HEK293 (cell line): ENCODE measurements at regions of chr20 and their contacts with region 1.

Region 1: DNA sequence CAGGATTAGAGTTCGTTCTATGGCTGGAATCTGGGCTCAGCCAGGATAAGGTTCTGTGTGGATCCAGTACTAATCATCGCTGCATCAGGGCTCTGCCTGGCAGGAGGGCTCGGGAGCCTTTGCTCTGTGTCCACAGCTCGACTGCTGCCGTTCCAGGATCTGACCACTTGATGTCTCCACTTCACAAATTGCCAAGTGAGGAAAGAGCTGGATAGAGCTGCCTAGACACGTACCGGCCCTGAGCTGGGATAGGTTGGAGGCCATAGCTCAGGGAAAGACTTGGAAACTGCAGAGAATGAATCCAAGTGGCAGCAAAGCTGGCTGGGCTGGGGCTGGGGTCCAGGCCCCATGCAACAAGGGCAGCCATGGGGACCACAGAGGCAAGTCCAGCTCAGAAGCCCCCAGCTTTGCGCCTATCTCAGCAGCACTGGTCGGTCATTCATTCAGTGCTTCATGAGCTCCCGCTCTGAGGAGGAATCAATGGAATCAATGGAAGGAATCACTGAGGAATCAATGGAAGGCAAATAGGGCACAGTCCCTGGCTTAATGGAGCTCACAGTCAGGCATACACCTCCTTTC is 38.0 kb upstream of the TOP1 start:
- H3K4me3 ChIP-seq: no peak overlapping the region
- H3K27ac ChIP-seq: no peak overlapping the region
- H3K4me1 ChIP-seq: no peaks in the 10 kb centered on the region
- CTCF ChIP-seq: peak; percentile 79

Region 2: DNA sequence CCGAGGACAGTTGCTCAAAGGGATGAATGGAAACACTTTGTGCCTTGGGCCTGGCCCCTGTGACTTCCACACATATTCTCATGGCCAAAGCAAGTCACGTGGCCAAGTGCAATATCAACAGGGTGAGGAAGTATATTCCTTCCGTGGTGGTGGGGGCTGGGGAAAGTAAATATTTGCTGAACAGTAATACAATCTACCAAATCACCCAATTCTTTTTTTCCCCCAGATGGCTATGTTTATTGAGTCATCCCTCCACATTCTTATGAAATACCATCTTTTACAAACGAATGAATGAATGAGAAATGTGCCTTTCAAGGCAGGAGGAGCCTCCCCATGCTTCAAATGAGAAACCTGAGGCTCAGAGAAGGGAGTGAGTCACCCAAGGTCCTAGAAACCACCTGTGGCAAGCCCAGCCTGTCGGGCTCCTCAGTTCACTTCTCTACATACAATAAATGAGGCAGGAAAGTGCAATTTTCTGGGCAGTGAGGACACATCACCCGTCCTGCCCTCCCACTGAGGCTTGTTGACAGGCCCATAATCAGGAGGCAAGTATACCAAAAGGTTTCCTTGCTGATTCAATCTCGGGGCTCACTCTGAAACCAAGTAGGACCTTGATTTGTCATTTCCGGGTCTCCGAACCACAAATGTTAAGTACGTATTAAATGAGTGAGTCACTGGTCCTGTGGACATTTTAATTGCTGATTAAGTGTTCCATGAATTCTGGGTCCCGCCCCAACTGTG is 12.7 kb after region 1 on chr20:
- CTCF ChIA-PET with region 1: interaction called, 21 read pairs
- POLR2A ChIA-PET with region 1: no interaction called
- H3K4me3 ChIP-seq: peak overlapping the region; percentile 33
- H3K27ac ChIP-seq: peak overlapping the region; percentile 78
- H3K4me1 ChIP-seq: peaks cover 7% of the 10 kb centered on the region
- CTCF ChIP-seq: no peak

Region 3: GRCh38 chr20:41047279-41047974 is 56.8 kb after region 1 on chr20:
- CTCF ChIA-PET with region 1: interaction called, 10 read pairs
- POLR2A ChIA-PET with region 1: no interaction called
- H3K4me3 ChIP-seq: no peak overlapping the region
- H3K27ac ChIP-seq: no peak overlapping the region
- H3K4me1 ChIP-seq: peaks cover 40% of the 10 kb centered on the region
- CTCF ChIP-seq: no peak

Region 4: GRCh38 chr20:41086402-41087338 is 96.0 kb after region 1 on chr20:
- CTCF ChIA-PET with region 1: interaction called, 14 read pairs
- POLR2A ChIA-PET with region 1: interaction called, 4 read pairs
- H3K4me3 ChIP-seq: no peak overlapping the region
- H3K27ac ChIP-seq: peak overlapping the region; percentile 18; the same call in 1 of the 2 replicates
- H3K4me1 ChIP-seq: peaks cover 10% of the 10 kb centered on the region; the same call in 1 of the 2 replicates
- CTCF ChIP-seq: no peak